A673 (cell line): ENCODE measurements at regions of chr18 and their contacts with region 1.

Region 1: DNA sequence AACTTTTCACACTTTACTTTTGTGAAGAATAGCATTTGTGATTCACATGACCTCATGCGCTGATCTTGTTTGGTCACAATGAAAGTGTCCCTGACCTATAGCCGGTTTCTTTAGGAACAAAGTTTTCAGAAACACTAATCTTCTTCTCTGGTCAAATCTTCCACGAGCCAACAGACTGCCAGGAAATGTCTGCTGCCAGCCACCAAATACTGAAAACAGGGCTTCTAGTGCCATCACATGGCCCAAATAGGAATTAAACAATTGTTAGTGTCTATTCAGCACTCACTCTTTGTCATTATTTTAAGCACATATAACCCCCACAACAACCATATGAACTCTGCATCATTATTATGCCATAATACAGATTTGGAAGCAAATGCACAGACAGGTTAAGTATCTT is 286.5 kb upstream of the SYT4 start:
- DNase-seq: peak; percentile 67
- H3K4me3 ChIP-seq: no peak overlapping the region
- H3K27ac ChIP-seq: no peak overlapping the region
- H3K4me1 ChIP-seq: no peaks in the 10 kb centered on the region
- H3K27me3 ChIP-seq: no peaks in the 10 kb centered on the region
- CTCF ChIP-seq: peak; percentile 68

Region 2: DNA sequence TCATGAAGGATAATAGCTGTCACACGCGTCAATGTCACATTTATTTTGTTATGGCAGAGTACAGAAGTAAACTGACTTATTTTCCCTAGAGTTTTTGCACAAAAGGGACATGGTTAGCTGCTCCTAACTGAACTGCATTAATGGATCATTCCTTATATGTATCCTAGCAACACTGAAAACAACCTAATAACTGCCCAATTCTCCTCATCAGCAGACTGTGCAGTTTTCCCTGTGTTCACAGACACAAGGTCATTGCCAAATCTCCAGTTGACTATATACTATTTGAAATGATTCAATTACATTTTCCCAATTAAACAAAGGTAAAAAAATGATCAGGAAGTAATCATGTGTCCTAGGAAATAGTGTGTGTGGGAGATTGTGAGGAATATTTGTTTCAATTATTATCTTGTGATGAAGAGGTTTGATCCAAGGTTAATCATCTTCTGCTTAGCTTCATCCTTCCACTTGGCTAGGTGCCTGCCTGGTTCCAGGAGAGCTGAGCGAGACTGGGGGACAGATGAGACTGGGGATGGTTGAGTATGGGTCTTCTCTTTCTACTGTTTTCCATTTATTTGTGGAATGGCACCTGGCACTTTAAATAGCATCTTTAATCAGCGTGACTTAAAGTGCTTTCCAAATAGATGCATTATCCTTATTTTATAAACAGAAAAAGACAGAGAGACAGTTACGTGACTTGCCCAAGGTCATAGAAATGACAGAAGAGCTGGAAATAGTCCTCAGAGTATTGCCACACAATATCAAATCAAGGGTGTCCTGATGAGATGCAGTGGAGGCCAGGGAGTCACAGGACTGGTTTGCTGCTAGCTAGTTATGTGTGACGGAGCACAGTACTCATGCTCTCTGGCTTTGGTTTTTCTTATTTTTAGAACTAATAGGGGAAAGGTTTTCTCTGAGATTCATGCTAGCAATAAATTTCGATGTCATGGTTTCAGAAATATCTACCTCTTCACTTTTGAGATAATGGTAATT is 1273.2 kb before region 1 on chr18:
- CTCF ChIA-PET with region 1: no interaction called
- POLR2A ChIA-PET with region 1: no interaction called
- intact Hi-C with region 1: loop called (anchors 5 kb)
- DNase-seq: no peak
- H3K4me3 ChIP-seq: no peak overlapping the region
- H3K27ac ChIP-seq: no peak overlapping the region
- H3K4me1 ChIP-seq: no peaks in the 10 kb centered on the region
- H3K27me3 ChIP-seq: no peaks in the 10 kb centered on the region
- CTCF ChIP-seq: no peak

Region 3: DNA sequence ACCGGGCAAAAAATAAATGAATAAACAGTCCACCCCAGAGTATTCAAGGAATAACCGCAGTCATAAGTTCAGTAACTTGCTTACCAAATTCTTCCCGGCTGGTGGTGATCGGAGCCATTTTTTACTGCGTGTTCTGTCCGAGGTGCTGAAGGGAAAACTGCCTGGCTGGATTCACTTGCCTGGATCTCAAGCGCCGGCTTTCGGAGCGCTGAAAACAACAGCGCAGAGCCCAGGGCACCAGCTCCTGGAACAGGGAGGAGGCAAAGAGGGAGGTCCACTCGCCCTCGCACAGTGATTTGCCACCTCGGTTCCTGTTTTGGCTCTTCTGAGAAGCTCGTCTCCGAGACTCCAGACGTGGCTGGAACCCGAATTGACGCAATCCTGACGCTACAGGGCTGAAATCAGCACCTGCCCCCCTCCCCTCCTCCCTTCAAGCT is 286.6 kb before region 1 on chr18 and contains the start of gene SYT4:
- CTCF ChIA-PET with region 1: no interaction called
- POLR2A ChIA-PET with region 1: no interaction called
- intact Hi-C with region 1: loop called (anchors 5 kb)
- DNase-seq: peak; percentile 72
- H3K4me3 ChIP-seq: no peak within 1 kb of the TSS
- H3K27ac ChIP-seq: no peak within 1 kb of the TSS
- H3K4me1 ChIP-seq: no peaks in the 10 kb centered on the region
- H3K27me3 ChIP-seq: no peaks in the 10 kb centered on the region
- CTCF ChIP-seq: no peak
- total RNA-seq, gene SYT4: 2.3 TPM in 2 replicates

Region 4: DNA sequence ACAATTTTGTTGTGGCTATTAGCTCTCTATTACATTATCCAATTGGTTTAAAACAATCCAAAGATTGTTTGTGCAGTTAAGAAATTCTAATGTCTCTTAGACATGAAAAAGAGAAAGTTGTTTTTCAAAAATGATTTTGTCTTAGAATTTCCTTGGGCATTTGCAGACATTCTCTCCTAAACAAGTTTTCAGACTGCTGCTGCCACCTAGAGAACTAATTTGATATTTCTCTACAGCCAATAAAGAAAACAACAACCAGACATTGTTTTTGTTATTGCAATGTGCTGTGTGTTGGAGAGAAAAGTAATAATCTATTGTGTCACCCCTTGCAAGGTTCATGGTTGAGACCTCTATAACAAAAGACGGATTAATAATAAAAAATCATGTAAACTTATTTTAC is 167.5 kb before region 1 on chr18:
- CTCF ChIA-PET with region 1: no interaction called
- POLR2A ChIA-PET with region 1: no interaction called
- intact Hi-C with region 1: loop called (anchors 10 kb)
- DNase-seq: peak; percentile 45
- H3K4me3 ChIP-seq: no peak overlapping the region
- H3K27ac ChIP-seq: no peak overlapping the region
- H3K4me1 ChIP-seq: no peaks in the 10 kb centered on the region
- H3K27me3 ChIP-seq: no peaks in the 10 kb centered on the region
- CTCF ChIP-seq: peak; percentile 67

Region 5: DNA sequence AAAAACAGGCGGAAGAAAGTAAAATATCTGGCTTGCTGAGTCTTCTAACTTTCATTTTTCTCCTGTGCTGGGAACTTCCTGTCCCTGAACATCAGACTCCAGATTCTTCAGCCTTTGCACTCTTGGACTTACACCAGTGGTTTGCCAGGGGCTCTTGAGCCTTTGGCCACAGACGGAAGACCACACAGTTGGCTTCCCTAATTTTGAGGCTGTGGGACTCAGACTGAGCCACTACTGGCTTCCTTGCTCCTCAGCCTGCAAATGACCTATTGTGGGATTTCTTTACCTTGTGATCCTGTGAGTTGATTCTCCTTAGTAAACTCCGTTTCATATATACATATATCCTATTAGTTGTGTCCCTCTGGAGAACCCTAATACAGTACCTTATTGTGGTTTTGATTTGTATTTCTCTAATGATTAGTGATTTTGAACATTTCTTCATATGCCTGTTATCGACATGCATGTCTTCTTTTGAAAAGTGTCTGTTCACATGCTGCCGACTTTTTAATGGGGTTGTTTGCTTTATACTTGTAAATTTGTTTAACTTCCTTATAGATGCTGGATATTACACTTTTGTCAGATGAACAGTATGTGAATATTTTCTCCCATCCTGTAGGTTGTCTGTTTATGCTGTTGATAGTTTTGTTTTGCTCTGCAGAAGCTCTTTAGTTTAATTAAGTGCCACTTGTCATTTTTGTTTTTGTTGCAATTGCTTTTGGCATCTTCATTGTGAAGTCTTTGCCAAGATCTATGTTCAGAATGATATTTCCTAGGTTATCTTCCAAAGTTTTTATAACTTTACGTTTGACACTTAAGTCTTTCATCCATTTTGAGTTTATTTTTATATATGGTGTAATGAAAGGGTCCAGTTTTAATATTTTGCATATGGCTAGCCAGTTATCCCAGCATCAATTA is 768.1 kb after region 1 on chr18:
- CTCF ChIA-PET with region 1: no interaction called
- POLR2A ChIA-PET with region 1: no interaction called
- intact Hi-C with region 1: no loop called
- DNase-seq: no peak
- H3K4me3 ChIP-seq: no peak overlapping the region
- H3K27ac ChIP-seq: no peak overlapping the region
- H3K4me1 ChIP-seq: no peaks in the 10 kb centered on the region
- H3K27me3 ChIP-seq: no peaks in the 10 kb centered on the region
- CTCF ChIP-seq: no peak